Naive thymus-derived CD4-positive, alpha-beta T cell (primary cell): ENCODE measurements at regions of chr7 and their contacts with region 1.

Region 1: GRCh38 chr7:150753826-150754603 is 16.8 kb downstream of the GIMAP5 start:
- DNase-seq: peak in 1 of 9 donors; percentile 36
- ATAC-seq: no peak
- H3K4me3 ChIP-seq: no peak overlapping the region
- H3K4me3 Mint-ChIP-seq: peak overlapping the region; percentile 30 to 83 (median 68)
- H3K27ac ChIP-seq: peak overlapping the region; percentile 60
- H3K27ac Mint-ChIP-seq: peak overlapping the region; percentile 88 to 97 (median 95)
- H3K4me1 ChIP-seq: peaks cover 44 to 70% of the 10 kb centered on the region in 2 donors
- H3K4me1 Mint-ChIP-seq: peaks cover 36 to 81% (median 78%) of the 10 kb centered on the region in 7 donors
- H3K27me3 ChIP-seq: no peaks in the 10 kb centered on the region
- H3K27me3 Mint-ChIP-seq: peaks cover 0 to 2% (median 0%) of the 10 kb centered on the region in 5 donors

Region 2: GRCh38 chr7:150378853-150379440 is 375.1 kb before region 1 on chr7 and contains the start of gene ZNF775:
- CTCF ChIA-PET with region 1: no interaction called
- POLR2A ChIA-PET with region 1: interaction called, 3 read pairs
- intact Hi-C with region 1: loop called in 1 of 2 experiments (anchors 1 kb)
- DNase-seq: peak; percentile 87 to 96 (median 90)
- ATAC-seq: peak; percentile 98
- H3K4me3 ChIP-seq: peak within 1 kb of the TSS; percentile 68
- H3K4me3 Mint-ChIP-seq: peak within 1 kb of the TSS; percentile 84 to 95 (median 90)
- H3K27ac ChIP-seq: peak within 1 kb of the TSS; percentile 91
- H3K27ac Mint-ChIP-seq: peak within 1 kb of the TSS; percentile 61 to 95 (median 86)
- H3K4me1 ChIP-seq: peaks cover 4 to 30% of the 10 kb centered on the region in 2 donors
- H3K4me1 Mint-ChIP-seq: peaks cover 32 to 57% (median 46%) of the 10 kb centered on the region in 7 donors
- H3K27me3 ChIP-seq: no peaks in the 10 kb centered on the region
- H3K27me3 Mint-ChIP-seq: no peaks in the 10 kb centered on the region
- total RNA-seq, gene ZNF775: 1.1 to 5.7 (median 4.3) TPM

Region 3: GRCh38 chr7:150420987-150421674 is 332.9 kb before region 1 on chr7:
- CTCF ChIA-PET with region 1: interaction called, 5 read pairs
- POLR2A ChIA-PET with region 1: no interaction called
- intact Hi-C with region 1: loop called in 1 of 2 experiments (anchors 1 kb)
- DNase-seq: peak; percentile 65 to 87 (median 81)
- ATAC-seq: peak; percentile 99
- H3K4me3 ChIP-seq: no peak overlapping the region
- H3K4me3 Mint-ChIP-seq: peak overlapping the region; percentile 16 to 75 (median 52)
- H3K27ac ChIP-seq: no peak overlapping the region
- H3K27ac Mint-ChIP-seq: peak overlapping the region in 7 of 9 donors; percentile 18 to 78 (median 45)
- H3K4me1 ChIP-seq: peaks cover 3 to 4% of the 10 kb centered on the region in 2 donors
- H3K4me1 Mint-ChIP-seq: peaks cover 5 to 17% (median 8%) of the 10 kb centered on the region in 7 donors
- H3K27me3 ChIP-seq: no peaks in the 10 kb centered on the region
- H3K27me3 Mint-ChIP-seq: peaks cover 0 to 6% (median 0%) of the 10 kb centered on the region in 5 donors

Region 4: GRCh38 chr7:150507947-150508602 is 245.9 kb before region 1 on chr7:
- CTCF ChIA-PET with region 1: interaction called, 4 read pairs
- POLR2A ChIA-PET with region 1: interaction called, 212 read pairs
- intact Hi-C with region 1: no loop called
- DNase-seq: peak in 1 of 9 donors; percentile 22
- ATAC-seq: peak; percentile 56
- H3K4me3 ChIP-seq: peak overlapping the region; percentile 52
- H3K4me3 Mint-ChIP-seq: peak overlapping the region; percentile 67 to 99 (median 88)
- H3K27ac ChIP-seq: peak overlapping the region; percentile 74
- H3K27ac Mint-ChIP-seq: peak overlapping the region; percentile 92 to 98 (median 95)
- H3K4me1 ChIP-seq: peaks cover 61 to 93% of the 10 kb centered on the region in 2 donors
- H3K4me1 Mint-ChIP-seq: peaks cover 54 to 98% (median 94%) of the 10 kb centered on the region in 7 donors
- H3K27me3 ChIP-seq: no peaks in the 10 kb centered on the region
- H3K27me3 Mint-ChIP-seq: no peaks in the 10 kb centered on the region

Region 5: DNA sequence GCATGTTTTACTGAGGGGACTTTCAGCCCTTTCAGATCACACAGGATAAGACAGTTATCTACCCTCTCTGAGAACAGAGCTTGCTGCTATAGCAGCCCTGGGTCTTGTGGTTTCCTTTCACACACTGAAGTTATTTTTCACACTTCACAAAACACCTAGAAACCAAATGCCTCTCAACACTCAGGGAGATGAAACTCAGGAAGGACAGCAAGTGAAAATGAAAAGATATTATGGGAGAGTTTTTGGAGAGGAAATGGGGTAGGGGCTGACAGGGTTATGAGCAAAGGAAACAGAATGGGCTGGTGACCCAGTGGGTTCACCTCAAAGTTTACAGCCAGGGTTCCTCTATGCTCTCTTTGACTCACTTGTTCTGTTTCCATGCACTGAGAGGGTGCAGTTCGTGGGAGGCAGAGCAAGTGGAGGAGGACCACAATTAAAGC is 85.5 kb before region 1 on chr7:
- CTCF ChIA-PET with region 1: interaction called, 5 read pairs
- POLR2A ChIA-PET with region 1: interaction called, 29 read pairs
- intact Hi-C with region 1: loop called (anchors 1 kb)
- DNase-seq: peak in 8 of 9 donors; percentile 66 to 87 (median 81)
- ATAC-seq: peak; percentile 88
- H3K4me3 ChIP-seq: peak overlapping the region; percentile 30
- H3K4me3 Mint-ChIP-seq: peak overlapping the region; percentile 57 to 85 (median 72)
- H3K27ac ChIP-seq: peak overlapping the region; percentile 78
- H3K27ac Mint-ChIP-seq: peak overlapping the region; percentile 73 to 100 (median 97)
- H3K4me1 ChIP-seq: peaks cover 71 to 86% of the 10 kb centered on the region in 2 donors
- H3K4me1 Mint-ChIP-seq: peaks cover 58 to 99% (median 94%) of the 10 kb centered on the region in 7 donors
- H3K27me3 ChIP-seq: no peaks in the 10 kb centered on the region
- H3K27me3 Mint-ChIP-seq: no peaks in the 10 kb centered on the region

Region 6: GRCh38 chr7:150685219-150686029 is 68.6 kb before region 1 on chr7 and contains the start of gene GIMAP2:
- CTCF ChIA-PET with region 1: interaction called, 10 read pairs
- POLR2A ChIA-PET with region 1: interaction called, 151 read pairs
- intact Hi-C with region 1: loop called (anchors 1 to 2 kb)
- DNase-seq: peak in 7 of 9 donors; percentile 40 to 73 (median 65)
- ATAC-seq: peak; percentile 90
- H3K4me3 ChIP-seq: peak within 1 kb of the TSS; percentile 97
- H3K4me3 Mint-ChIP-seq: peak within 1 kb of the TSS; percentile 88 to 100 (median 98)
- H3K27ac ChIP-seq: peak within 1 kb of the TSS; percentile 78
- H3K27ac Mint-ChIP-seq: peak within 1 kb of the TSS; percentile 91 to 100 (median 97)
- H3K4me1 ChIP-seq: peaks cover 49 to 53% of the 10 kb centered on the region in 2 donors
- H3K4me1 Mint-ChIP-seq: peaks cover 50 to 87% (median 81%) of the 10 kb centered on the region in 7 donors
- H3K27me3 ChIP-seq: no peaks in the 10 kb centered on the region
- H3K27me3 Mint-ChIP-seq: no peaks in the 10 kb centered on the region
- total RNA-seq, gene GIMAP2: 79.4 to 286 (median 122) TPM

Region 7: GRCh38 chr7:150737265-150738055 is 16.6 kb before region 1 on chr7 and contains the start of gene GIMAP5:
- CTCF ChIA-PET with region 1: interaction called, 10 read pairs
- POLR2A ChIA-PET with region 1: interaction called, 212 read pairs
- intact Hi-C with region 1: loop called (anchors 1 to 2 kb)
- DNase-seq: peak in 6 of 9 donors; percentile 47 to 57 (median 56)
- ATAC-seq: peak; percentile 79
- H3K4me3 ChIP-seq: peak within 1 kb of the TSS; percentile 84
- H3K4me3 Mint-ChIP-seq: peak within 1 kb of the TSS; percentile 90 to 100 (median 98)
- H3K27ac ChIP-seq: peak within 1 kb of the TSS; percentile 82
- H3K27ac Mint-ChIP-seq: peak within 1 kb of the TSS; percentile 87 to 99 (median 96)
- H3K4me1 ChIP-seq: peaks cover 49 to 56% of the 10 kb centered on the region in 2 donors
- H3K4me1 Mint-ChIP-seq: peaks cover 56 to 73% (median 65%) of the 10 kb centered on the region in 7 donors
- H3K27me3 ChIP-seq: no peaks in the 10 kb centered on the region
- H3K27me3 Mint-ChIP-seq: no peaks in the 10 kb centered on the region
- total RNA-seq, gene GIMAP5: 58.1 to 422 (median 214) TPM